Activated B cell treated with CpG ODN at 0.5 μM for 24 hours (primary cell): ENCODE measurements at regions of chr10 and their contacts with region 1.

Region 1: DNA sequence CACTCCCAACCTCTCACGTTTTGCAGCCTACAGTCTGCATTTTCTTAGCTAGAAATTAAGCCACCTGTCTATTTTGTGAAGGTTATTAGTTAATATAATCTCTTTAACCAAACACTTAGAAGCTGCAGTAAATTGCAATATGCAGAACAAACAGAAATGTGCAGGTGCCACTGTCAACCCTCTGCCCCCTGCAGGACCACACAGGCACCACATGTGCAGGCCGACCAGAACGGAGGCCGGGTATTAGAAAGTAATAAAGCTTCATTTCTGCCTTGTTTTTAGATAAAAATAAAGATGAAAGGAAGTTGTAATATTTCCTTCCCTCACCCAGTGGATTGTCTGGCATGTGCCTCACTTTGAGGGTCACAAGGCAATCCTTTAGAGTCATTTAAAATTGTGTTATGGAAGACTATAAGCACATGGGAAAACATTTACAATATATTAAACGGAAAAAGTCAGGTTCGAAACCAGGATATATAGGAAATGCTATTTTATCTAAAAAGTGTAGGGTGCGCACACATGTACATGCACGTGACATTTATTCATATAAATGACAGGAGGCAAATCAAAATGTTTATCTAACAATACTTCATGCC is 158.2 kb downstream of the ARHGAP12 start:
- DNase-seq: no peak
- ATAC-seq: peak; percentile 96
- H3K4me3 Mint-ChIP-seq: no peak overlapping the region
- H3K27ac Mint-ChIP-seq: no peak overlapping the region
- H3K4me1 Mint-ChIP-seq: no peaks in the 10 kb centered on the region
- H3K27me3 Mint-ChIP-seq: no peaks in the 10 kb centered on the region
- CTCF ChIP-seq: peak; percentile 53

Region 2: DNA sequence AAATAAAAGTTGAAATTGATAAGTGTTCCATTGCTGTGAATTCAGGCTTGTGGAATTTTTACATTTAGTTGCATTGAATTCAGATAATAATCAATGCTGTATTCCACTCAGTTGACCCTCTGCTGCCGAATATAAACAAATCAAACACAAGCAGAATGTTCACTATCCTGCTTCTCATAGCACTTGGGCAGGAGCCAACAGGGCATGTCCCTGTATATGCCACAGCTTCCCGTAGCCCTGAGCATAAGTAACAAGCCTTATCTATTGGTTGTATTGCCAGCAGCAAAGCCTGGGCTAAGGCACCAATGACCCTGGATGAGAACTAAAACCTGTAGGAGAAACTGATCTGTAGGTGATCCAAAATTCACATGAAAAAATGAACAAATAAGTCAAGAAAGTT is 12.3 kb after region 1 on chr10:
- CTCF ChIA-PET with region 1: interaction called, 6 read pairs
- POLR2A ChIA-PET with region 1: interaction called, 14 read pairs
- intact Hi-C with region 1: no loop called
- DNase-seq: no peak
- ATAC-seq: no peak
- H3K4me3 Mint-ChIP-seq: no peak overlapping the region
- H3K27ac Mint-ChIP-seq: no peak overlapping the region
- H3K4me1 Mint-ChIP-seq: no peaks in the 10 kb centered on the region
- H3K27me3 Mint-ChIP-seq: peaks cover 5% of the 10 kb centered on the region
- CTCF ChIP-seq: no peak

Region 3: GRCh38 chr10:31792745-31793144 is 22.3 kb after region 1 on chr10:
- CTCF ChIA-PET with region 1: no interaction called
- POLR2A ChIA-PET with region 1: no interaction called
- intact Hi-C with region 1: no loop called
- DNase-seq: no peak
- ATAC-seq: no peak
- H3K4me3 Mint-ChIP-seq: no peak overlapping the region
- H3K27ac Mint-ChIP-seq: no peak overlapping the region
- H3K4me1 Mint-ChIP-seq: no peaks in the 10 kb centered on the region
- H3K27me3 Mint-ChIP-seq: peaks cover 6% of the 10 kb centered on the region
- CTCF ChIP-seq: no peak